ENCODE measurements at regions of chr22 and their contacts with region 1.

Region 1: GRCh38 chr22:35921777-35922176 is 106.8 kb downstream of the RBFOX2 start:
- DNase-seq: peak; percentile 86
- H3K4me3 ChIP-seq: no peak overlapping the region
- H3K27ac ChIP-seq: peak overlapping the region; percentile 29
- H3K4me1 ChIP-seq: peaks cover 61% of the 10 kb centered on the region
- CTCF ChIP-seq: peak; percentile 96

Region 2: GRCh38 chr22:35627264-35628041 is 294.3 kb before region 1 on chr22:
- CTCF ChIA-PET with region 1: interaction called, 4 read pairs
- POLR2A ChIA-PET with region 1: interaction called, 3 read pairs
- intact Hi-C with region 1: loop called (anchors 1 kb)
- DNase-seq: peak; percentile 83
- H3K4me3 ChIP-seq: peak overlapping the region; percentile 64
- H3K27ac ChIP-seq: peak overlapping the region; percentile 18
- H3K4me1 ChIP-seq: peaks cover 25% of the 10 kb centered on the region
- CTCF ChIP-seq: peak; percentile 83

Region 3: DNA sequence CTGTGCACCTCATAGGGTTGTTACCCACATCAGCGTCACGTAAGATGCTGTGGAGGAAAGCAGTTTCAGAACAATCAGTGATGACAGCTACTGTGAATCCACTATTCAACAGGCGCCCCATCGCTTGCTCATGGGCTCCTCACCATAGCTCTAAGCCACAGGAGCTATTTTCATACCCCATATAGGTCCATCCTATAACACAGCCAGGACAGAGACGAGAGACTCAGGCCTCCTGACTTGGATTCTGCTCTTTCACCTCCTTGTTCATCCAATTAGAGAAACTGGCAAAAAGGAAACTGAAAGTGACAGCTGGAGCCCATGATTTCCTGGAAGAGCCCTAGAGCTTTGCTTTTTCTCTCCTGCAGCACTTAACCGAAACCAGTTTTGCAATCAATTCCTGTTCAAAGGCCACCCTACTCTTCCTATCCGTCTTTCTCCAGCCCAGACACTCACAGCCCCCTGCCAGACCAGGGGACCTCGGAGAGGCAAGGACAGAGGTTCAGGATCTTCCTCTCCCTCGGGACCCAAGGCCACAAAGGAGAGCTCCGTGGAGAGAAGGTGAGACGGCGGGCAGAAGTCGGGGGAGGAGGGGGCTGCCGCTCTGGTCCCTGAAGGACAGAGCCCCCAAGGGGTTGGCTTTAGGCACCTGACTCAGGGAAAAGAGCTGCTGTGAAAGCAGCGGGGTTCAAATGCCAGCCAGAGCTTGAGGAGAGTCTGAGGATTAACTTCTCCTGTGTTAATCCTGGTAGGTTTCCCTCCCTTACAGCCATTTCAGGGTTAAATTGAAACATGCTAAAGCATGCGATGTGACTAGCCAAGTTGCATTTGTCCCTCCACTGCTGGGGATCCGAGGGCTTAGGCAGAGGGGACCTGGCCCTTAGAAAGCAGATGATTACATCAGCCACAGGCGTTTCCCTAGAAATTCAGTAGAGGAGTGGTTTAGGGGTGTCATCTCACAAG is 273.4 kb before region 1 on chr22 and contains the start of gene APOL6:
- CTCF ChIA-PET with region 1: no interaction called
- POLR2A ChIA-PET with region 1: no interaction called
- intact Hi-C with region 1: loop called (anchors 1 kb)
- DNase-seq: peak; percentile 81
- H3K4me3 ChIP-seq: peak within 1 kb of the TSS; percentile 76
- H3K27ac ChIP-seq: peak within 1 kb of the TSS; percentile 90
- H3K4me1 ChIP-seq: peaks cover 51% of the 10 kb centered on the region
- CTCF ChIP-seq: no peak
- total RNA-seq, gene APOL6: 27.8 and 28.8 TPM in 2 replicates

Region 4: DNA sequence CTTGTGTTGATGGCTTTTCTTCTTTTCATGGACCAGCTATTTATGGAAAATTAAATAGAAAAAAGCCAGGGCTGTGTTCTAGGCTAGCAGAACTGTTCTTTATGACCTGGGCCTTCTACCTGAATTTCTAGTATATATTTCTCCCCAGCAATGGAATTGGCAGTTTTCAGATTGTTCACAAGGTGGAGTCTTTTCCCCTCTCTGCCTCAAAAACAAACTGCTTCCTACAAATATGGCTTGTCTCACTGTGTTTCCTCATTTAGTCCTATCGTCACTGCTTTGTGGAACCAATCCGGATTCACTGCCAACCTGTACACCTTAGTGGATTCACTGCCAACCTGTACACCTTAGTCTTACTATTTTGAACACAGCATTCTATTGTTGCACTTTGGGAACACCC is 209.1 kb before region 1 on chr22:
- CTCF ChIA-PET with region 1: no interaction called
- POLR2A ChIA-PET with region 1: interaction called, 9 read pairs
- intact Hi-C with region 1: loop called (anchors 1 kb)
- DNase-seq: peak; percentile 45
- H3K4me3 ChIP-seq: no peak overlapping the region
- H3K27ac ChIP-seq: no peak overlapping the region
- H3K4me1 ChIP-seq: no peaks in the 10 kb centered on the region
- CTCF ChIP-seq: peak; percentile 74

Region 5: DNA sequence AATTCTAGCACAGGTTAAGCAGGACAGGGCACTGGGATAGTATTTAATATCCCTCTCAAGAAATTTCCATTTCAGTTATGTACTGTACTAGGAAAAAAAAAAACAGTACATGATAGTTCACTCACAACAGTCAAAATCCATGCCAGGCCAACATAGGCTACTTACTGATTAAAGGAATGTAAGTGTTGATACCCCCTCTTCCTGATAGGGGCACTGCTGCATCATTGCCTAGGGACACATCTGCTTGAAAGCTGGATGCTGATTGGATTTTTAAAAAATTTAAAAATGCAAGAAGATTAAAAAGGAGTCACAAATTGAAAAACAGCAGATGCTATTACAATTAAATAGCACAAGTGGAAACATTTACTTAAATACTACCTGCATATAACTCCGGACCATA is 160.7 kb before region 1 on chr22:
- CTCF ChIA-PET with region 1: no interaction called
- POLR2A ChIA-PET with region 1: no interaction called
- intact Hi-C with region 1: loop called (anchors 2 kb)
- DNase-seq: no peak
- H3K4me3 ChIP-seq: no peak overlapping the region
- H3K27ac ChIP-seq: no peak overlapping the region
- H3K4me1 ChIP-seq: peaks cover 29% of the 10 kb centered on the region
- CTCF ChIP-seq: peak; percentile 78

Region 6: GRCh38 chr22:35840302-35840739 is 81.5 kb before region 1 on chr22:
- CTCF ChIA-PET with region 1: no interaction called
- POLR2A ChIA-PET with region 1: interaction called, 5 read pairs
- intact Hi-C with region 1: loop called (anchors 1 kb)
- DNase-seq: peak; percentile 74
- H3K4me3 ChIP-seq: peak overlapping the region; percentile 74
- H3K27ac ChIP-seq: peak overlapping the region; percentile 67
- H3K4me1 ChIP-seq: peaks cover 81% of the 10 kb centered on the region
- CTCF ChIP-seq: no peak

Region 7: GRCh38 chr22:35861451-35861850 is 60.3 kb before region 1 on chr22:
- CTCF ChIA-PET with region 1: no interaction called
- POLR2A ChIA-PET with region 1: no interaction called
- intact Hi-C with region 1: loop called (anchors 2 kb)
- DNase-seq: peak; percentile 84
- H3K4me3 ChIP-seq: peak overlapping the region; percentile 47
- H3K27ac ChIP-seq: peak overlapping the region; percentile 99
- H3K4me1 ChIP-seq: peaks cover 100% of the 10 kb centered on the region
- CTCF ChIP-seq: no peak

Region 8: DNA sequence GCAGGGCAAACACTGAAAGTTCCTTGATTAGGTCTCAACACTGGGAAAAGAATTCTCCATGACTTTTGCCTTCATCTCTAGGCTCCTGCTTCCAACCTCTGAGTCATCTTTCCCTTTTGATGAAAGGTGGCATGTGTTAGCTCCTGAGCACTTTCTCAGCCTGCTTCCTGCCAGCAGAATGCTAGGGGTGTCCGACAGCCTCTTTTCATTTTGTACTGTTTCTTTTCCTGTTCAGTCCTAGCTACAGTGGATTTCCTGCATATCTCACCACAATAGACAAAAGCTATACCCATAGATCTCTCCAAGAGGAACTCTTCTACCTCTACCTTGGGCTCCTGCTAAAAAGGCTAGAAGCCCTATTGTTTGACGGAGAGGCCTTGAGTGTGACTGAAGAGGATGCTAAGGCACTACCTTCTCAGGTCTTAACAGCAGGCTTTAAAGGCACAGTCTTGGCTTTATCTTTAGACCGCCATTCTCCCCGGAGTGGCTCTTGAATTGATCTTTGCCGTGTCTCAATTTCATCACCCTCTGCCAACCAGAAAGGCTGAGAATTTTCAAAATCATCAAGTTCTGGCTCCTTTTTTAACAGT is 38.7 kb before region 1 on chr22:
- CTCF ChIA-PET with region 1: no interaction called
- POLR2A ChIA-PET with region 1: no interaction called
- intact Hi-C with region 1: no loop called
- DNase-seq: peak; percentile 67
- H3K4me3 ChIP-seq: peak overlapping the region; percentile 49
- H3K27ac ChIP-seq: peak overlapping the region; percentile 87
- H3K4me1 ChIP-seq: peaks cover 66% of the 10 kb centered on the region
- CTCF ChIP-seq: no peak

Region 9: DNA sequence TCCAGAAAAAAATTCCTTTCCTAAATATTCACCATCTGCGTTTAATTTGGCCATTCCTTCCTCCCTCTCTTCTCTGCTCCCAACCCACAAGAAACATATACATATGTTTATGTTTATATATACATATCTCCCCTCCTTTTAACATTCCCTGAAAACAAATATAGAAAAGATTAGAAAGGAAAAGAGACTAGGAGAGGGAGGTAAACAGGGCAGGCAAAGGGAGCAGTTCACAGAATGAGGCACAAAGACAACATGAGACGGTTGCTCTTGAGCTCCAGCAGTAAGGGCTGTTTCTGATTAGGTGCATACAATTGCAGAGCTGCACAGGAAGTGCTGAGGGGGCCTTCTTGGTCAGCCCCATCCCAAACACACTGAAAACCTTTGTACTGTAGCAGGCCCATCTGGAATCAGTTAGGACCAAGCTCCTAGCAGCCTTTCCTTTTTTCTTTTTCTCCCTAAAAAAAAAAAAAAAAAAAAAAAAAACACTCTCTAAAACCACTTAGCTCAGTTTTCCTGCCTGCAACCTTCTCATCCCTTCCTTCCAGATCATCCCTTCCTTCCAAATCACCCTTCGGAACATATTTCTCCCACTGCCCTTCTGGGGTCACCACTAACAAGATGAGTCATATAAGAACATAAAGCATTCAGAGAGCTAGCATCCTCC is 49.8 kb after region 1 on chr22:
- CTCF ChIA-PET with region 1: no interaction called
- POLR2A ChIA-PET with region 1: no interaction called
- intact Hi-C with region 1: no loop called
- DNase-seq: peak; percentile 23
- H3K4me3 ChIP-seq: no peak overlapping the region
- H3K27ac ChIP-seq: no peak overlapping the region
- H3K4me1 ChIP-seq: peaks cover 13% of the 10 kb centered on the region
- CTCF ChIP-seq: no peak

Measured in OCI-LY7 (cell line).